HCT116 (cell line): ENCODE measurements at regions of chr17 and their contacts with region 1.

Region 1: GRCh38 chr17:29807520-29808351 is 122.3 kb downstream of the SSH2 start:
- DNase-seq: peak; percentile 18
- ATAC-seq: peak; percentile 85
- H3K4me3 ChIP-seq: no peak overlapping the region
- H3K27ac ChIP-seq: no peak overlapping the region
- H3K4me1 ChIP-seq: peaks cover 0 to 6% of the 10 kb centered on the region in 2 experiments; a peak in 1 of 4 replicates
- H3K27me3 ChIP-seq: no peaks in the 10 kb centered on the region
- CTCF ChIP-seq: peak; percentile 67 to 79 (median 77)
- POLR2A ChIP-seq: no peak
- RAD21 ChIP-seq: peak; percentile 83

Region 2: GRCh38 chr17:29789196-29790170 is 18.3 kb before region 1 on chr17:
- CTCF ChIA-PET with region 1: interaction called, 10 read pairs
- POLR2A ChIA-PET with region 1: no interaction called
- RAD21 ChIA-PET with region 1: no interaction called
- intact Hi-C with region 1: no loop called
- DNase-seq: no peak
- ATAC-seq: no peak
- H3K4me3 ChIP-seq: no peak overlapping the region
- H3K27ac ChIP-seq: no peak overlapping the region
- H3K4me1 ChIP-seq: peaks cover 10 to 19% of the 10 kb centered on the region in 2 experiments
- H3K27me3 ChIP-seq: no peaks in the 10 kb centered on the region
- CTCF ChIP-seq: no peak
- POLR2A ChIP-seq: no peak
- RAD21 ChIP-seq: no peak

Region 3: DNA sequence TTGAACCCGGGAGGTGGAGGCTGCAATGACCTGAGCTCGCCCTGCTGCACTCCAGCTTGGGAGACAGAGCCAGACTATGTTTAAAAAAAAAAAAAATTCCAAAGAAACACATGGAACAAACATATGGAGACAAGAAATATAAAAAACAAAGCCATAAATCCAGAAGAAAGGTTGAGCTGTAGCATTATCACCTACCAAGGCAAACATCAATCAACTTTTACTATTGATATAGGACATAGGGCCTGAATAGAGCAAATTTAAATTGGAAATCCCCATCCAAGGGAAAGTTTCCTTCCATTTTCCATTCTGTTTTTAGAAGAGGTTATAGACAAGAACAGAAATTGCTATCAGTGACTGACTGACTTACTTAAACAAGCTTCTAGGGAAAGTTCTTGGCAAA is 65.7 kb after region 1 on chr17:
- CTCF ChIA-PET with region 1: no interaction called
- POLR2A ChIA-PET with region 1: no interaction called
- RAD21 ChIA-PET with region 1: no interaction called
- intact Hi-C with region 1: no loop called
- DNase-seq: no peak
- ATAC-seq: no peak
- H3K4me3 ChIP-seq: no peak overlapping the region
- H3K27ac ChIP-seq: no peak overlapping the region
- H3K4me1 ChIP-seq: no peaks in the 10 kb centered on the region
- H3K27me3 ChIP-seq: no peaks in the 10 kb centered on the region
- CTCF ChIP-seq: no peak
- POLR2A ChIP-seq: no peak
- RAD21 ChIP-seq: no peak

Region 4: DNA sequence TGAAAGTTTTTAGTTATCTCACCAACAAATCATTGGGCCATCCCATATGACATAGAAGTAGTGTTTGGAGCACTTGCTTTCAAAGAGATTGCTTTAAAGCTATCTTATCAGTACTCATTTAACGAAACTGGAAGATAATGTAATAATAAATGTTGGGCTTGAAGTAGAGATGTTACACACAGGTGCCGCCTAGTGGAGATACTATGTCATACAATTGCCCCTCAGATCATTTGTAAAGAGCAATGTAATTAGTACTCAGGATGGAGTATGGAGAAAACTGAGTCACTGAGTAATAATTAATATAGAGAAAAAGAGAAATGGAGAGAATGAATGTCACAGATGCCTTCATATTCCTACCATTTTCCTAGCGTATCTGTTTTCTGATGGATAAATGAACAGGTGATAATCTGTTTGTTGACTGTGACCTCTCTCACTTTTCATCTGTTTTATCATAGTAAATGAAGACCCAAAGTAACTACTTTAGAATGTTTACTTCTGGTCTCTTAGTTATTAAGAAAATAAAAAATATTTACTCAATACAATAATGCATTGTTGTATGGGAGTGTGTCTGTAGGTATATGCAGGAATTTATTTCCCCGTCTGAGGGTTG is 214.1 kb after region 1 on chr17:
- CTCF ChIA-PET with region 1: interaction called, 16 read pairs
- POLR2A ChIA-PET with region 1: no interaction called
- RAD21 ChIA-PET with region 1: no interaction called
- intact Hi-C with region 1: loop called (anchors 1 kb)
- DNase-seq: peak; percentile 37
- ATAC-seq: peak; percentile 80
- H3K4me3 ChIP-seq: no peak overlapping the region
- H3K27ac ChIP-seq: no peak overlapping the region
- H3K4me1 ChIP-seq: no peaks in the 10 kb centered on the region
- H3K27me3 ChIP-seq: no peaks in the 10 kb centered on the region
- CTCF ChIP-seq: peak; percentile 72 to 85 (median 80); a peak in 5 of 6 replicates
- POLR2A ChIP-seq: no peak
- RAD21 ChIP-seq: peak; percentile 70